ENCODE measurements at regions of chr3 and their contacts with region 1.

Region 1: DNA sequence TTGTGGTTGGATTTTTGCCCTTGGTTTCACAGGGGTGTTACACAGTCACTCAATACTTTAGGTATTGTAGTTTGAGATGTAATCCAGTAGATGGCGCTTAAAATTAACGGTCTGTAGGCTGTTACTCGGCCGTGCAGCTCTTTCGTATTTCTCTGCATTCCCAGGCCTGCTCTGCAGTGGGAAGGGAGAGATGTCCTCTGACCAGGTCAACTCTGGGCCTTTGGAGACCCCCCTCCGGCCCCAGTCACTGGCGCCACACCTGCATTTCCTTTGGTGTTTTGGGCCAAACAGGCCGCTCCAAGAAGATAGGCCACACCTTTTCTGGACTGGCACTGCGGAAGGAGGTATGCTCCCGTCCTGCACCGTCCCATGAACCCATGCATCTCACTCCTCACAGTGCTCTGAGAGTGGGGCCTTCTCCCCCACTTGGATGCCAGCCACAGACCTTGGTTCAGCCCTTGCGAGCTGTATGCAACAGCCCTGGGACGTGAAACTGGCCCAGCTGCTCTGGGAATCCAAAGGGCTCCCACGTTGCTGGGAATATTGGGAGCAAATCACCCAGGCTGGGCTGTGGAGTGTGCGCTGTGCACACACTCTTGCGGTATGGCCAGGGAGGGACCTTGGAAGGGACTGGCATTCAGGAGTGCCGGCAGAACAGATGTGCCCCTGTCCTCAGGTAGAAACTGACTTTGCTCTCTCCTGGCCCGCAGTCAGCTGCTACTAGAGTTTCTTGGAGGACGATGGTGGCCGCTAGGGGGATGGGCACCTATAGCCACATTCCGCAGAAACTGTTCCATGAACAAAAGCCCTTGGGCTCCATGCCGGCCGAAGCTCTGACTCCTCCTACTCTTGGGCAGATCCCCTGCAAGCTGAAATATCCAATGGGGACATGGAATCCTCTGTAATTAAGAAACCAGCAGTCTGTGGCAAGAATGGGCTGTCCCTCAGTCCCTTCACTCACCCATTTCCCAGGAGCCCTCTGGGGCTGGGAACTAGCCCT is 410.5 kb upstream of the CADM2 start:
- DNase-seq: peak; percentile 21
- CTCF ChIP-seq: peak; percentile 65

Region 2: DNA sequence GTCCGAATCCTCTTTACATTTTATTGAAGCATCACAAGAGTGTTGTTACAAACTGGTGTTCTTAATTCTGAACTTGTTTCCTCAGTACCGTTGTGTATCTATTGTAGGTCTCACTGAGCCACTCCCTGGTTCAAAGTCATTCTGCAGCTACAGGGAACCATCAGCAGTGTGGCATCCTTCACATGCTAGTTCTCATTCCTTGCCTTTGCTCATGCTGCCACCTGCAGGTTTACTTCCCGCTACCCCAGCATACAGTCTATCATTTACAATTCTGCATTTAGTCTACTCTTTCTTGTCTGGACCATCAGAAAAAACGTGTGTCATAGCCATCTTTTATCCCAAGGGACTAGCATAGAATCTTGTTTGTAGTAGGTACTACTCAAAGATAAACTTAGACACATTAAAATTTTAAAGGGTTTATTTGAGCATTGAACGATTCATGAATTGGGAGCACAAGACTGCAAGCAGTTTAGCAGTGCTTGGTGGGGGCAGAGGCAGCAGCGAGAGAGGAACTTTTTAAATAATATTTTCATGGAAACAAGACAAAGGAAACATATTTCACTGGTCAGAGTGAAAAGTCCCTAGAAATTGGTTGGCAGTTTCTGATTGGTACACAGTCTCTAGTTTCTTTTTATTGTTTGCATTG is 812.6 kb after region 1 on chr3:
- CTCF ChIA-PET with region 1: interaction called, 20 read pairs
- POLR2A ChIA-PET with region 1: no interaction called
- DNase-seq: peak; percentile 3
- CTCF ChIP-seq: peak; percentile 47

Region 3: DNA sequence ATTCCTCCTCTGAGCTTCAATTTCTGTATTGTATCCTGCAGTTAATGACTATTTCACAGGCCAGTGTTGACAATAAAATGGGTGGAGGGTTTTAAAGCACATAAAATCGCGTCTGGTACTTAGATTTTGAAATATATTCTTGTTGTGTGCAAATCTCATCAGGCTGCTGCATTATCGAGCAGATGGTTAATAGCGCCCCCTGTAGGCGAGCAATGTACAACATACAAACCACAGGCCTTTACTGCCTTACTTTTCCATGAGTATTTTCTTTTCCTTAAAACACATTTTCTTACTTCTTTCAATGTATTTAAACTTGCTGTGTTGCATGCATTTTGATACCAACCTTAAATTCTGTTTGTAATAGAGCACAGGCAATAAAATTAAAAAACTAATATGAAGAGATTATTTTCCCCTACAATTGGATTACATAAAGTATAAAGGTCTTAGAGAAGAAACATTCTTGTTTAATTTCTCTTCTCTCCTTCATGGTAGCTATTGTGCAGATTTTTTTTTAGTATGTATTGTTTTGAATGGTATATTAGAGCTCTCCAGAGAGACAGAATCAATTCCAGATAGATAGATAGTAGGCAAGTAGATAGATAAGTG is 1018.9 kb after region 1 on chr3:
- CTCF ChIA-PET with region 1: interaction called, 56 read pairs
- POLR2A ChIA-PET with region 1: no interaction called
- DNase-seq: peak; percentile 20
- CTCF ChIP-seq: peak; percentile 58

Region 4: GRCh38 chr3:85576091-85576690 is 1027.9 kb after region 1 on chr3:
- CTCF ChIA-PET with region 1: interaction called, 56 read pairs
- POLR2A ChIA-PET with region 1: no interaction called
- DNase-seq: peak; percentile 37
- CTCF ChIP-seq: peak; percentile 84

Measured in GM10248 (cell line).